ENCODE measurements at regions of chr2 and their contacts with region 1.

Region 1: GRCh38 chr2:157032017-157032416 is 225.5 kb upstream of the GALNT5 start:
- DNase-seq: peak; percentile 96
- ATAC-seq: peak; percentile 95
- H3K4me3 ChIP-seq: no peak overlapping the region
- H3K27ac ChIP-seq: peak overlapping the region; percentile 85
- H3K4me1 ChIP-seq: peaks cover 30% of the 10 kb centered on the region
- H3K27me3 ChIP-seq: no peaks in the 10 kb centered on the region
- CTCF ChIP-seq: no peak

Region 2: DNA sequence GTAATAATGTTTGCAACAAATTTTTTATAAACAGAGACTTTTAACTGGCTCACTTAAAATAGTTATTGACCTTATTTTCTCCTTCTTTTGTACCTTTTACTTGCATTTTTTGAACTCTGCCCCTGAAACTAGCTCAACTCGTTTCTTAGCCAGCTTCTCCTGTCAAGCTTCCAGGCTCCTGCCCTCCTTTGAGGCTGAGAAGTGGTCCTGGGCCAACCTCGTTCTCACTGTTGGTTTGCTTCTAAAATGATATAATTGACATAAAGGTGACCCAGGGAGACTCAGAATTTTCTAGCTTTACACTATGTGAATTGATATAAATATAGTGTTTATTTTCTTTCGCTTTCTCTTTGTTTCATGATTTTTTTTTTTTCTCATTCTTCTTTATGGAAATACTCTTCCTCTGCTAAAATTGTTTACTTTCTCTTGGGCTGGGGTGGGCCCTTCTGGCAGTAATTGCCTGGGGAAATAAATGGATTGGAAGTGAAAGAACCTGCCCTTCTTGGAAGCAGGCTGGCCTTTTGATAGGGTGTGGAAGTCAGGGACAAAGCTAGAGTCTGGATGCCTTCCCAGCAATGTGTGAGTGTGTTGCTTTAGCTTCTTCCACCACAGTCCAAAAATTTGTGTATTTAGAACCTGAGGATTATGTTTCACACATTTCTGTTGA is 565.1 kb before region 1 on chr2:
- CTCF ChIA-PET with region 1: no interaction called
- POLR2A ChIA-PET with region 1: interaction called, 3 read pairs
- intact Hi-C with region 1: loop called (anchors 10 kb)
- DNase-seq: peak; percentile 38
- ATAC-seq: peak; percentile 79
- H3K4me3 ChIP-seq: no peak overlapping the region
- H3K27ac ChIP-seq: peak overlapping the region; percentile 3; the same call in 1 of the 2 replicates
- H3K4me1 ChIP-seq: peaks cover 38% of the 10 kb centered on the region
- H3K27me3 ChIP-seq: no peaks in the 10 kb centered on the region
- CTCF ChIP-seq: no peak

Region 3: DNA sequence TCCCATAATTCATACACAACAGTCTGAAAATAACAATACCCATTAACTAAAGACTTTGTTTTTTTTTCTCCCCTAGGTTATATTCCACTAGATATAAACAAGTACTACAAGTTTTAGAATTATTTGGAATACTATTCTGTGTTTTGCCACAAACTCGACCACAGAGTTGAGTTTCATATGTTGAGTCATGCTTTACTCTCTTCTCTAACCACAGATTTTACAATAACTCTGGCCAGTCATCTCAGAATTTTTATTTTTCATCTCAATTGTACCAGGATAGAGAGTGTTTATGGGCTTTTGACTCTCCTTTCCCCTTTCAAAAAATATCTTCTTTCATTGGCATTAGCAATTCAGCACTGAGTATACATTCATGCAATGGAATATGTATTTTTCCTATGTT is 123.2 kb before region 1 on chr2:
- CTCF ChIA-PET with region 1: no interaction called
- POLR2A ChIA-PET with region 1: no interaction called
- intact Hi-C with region 1: loop called (anchors 2 kb)
- DNase-seq: peak; percentile 89
- ATAC-seq: peak; percentile 90
- H3K4me3 ChIP-seq: no peak overlapping the region
- H3K27ac ChIP-seq: peak overlapping the region; percentile 70
- H3K4me1 ChIP-seq: peaks cover 28% of the 10 kb centered on the region
- H3K27me3 ChIP-seq: no peaks in the 10 kb centered on the region
- CTCF ChIP-seq: no peak

Region 4: GRCh38 chr2:156935632-156936031 is 96.4 kb before region 1 on chr2:
- CTCF ChIA-PET with region 1: no interaction called
- POLR2A ChIA-PET with region 1: no interaction called
- intact Hi-C with region 1: loop called (anchors 2 kb)
- DNase-seq: peak; percentile 98
- ATAC-seq: peak; percentile 95
- H3K4me3 ChIP-seq: no peak overlapping the region; the same call in 1 of the 2 replicates
- H3K27ac ChIP-seq: peak overlapping the region; percentile 60
- H3K4me1 ChIP-seq: peaks cover 37% of the 10 kb centered on the region
- H3K27me3 ChIP-seq: no peaks in the 10 kb centered on the region
- CTCF ChIP-seq: no peak

Region 5: DNA sequence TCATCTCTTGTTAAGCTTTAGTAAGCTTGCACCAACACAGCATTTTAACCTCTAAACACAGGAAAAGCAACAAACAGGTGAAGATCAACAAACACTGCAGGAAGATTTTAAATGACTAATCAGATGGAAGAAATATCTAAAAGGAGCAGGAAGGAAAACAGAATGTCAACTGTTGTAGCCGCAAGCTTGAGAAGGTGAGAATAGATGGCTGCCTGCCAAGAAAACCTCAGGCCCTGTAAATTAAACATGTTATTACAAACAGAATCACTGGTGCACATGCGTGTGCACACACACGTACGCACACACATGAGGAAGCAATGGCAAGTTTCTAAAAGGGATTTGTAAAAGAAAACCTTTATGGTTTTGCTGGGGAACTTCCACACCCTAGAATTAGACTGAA is 32.4 kb before region 1 on chr2:
- CTCF ChIA-PET with region 1: no interaction called
- POLR2A ChIA-PET with region 1: no interaction called
- intact Hi-C with region 1: loop called (anchors 1 kb)
- DNase-seq: no peak
- ATAC-seq: no peak
- H3K4me3 ChIP-seq: no peak overlapping the region
- H3K27ac ChIP-seq: no peak overlapping the region
- H3K4me1 ChIP-seq: no peaks in the 10 kb centered on the region
- H3K27me3 ChIP-seq: no peaks in the 10 kb centered on the region
- CTCF ChIP-seq: no peak

Region 6: GRCh38 chr2:157158111-157158510 is 126.1 kb after region 1 on chr2:
- CTCF ChIA-PET with region 1: no interaction called
- POLR2A ChIA-PET with region 1: no interaction called
- intact Hi-C with region 1: no loop called
- DNase-seq: peak; percentile 43
- ATAC-seq: peak; percentile 49; the same call in 1 of the 2 replicates
- H3K4me3 ChIP-seq: no peak overlapping the region
- H3K27ac ChIP-seq: no peak overlapping the region
- H3K4me1 ChIP-seq: no peaks in the 10 kb centered on the region; the same call in 1 of the 2 replicates
- H3K27me3 ChIP-seq: no peaks in the 10 kb centered on the region
- CTCF ChIP-seq: no peak

Region 7: GRCh38 chr2:157182834-157183396 is 150.9 kb after region 1 on chr2:
- CTCF ChIA-PET with region 1: no interaction called
- POLR2A ChIA-PET with region 1: no interaction called
- intact Hi-C with region 1: loop called (anchors 1 kb)
- DNase-seq: peak; percentile 95
- ATAC-seq: peak; percentile 95
- H3K4me3 ChIP-seq: no peak overlapping the region; the same call in 1 of the 2 replicates
- H3K27ac ChIP-seq: peak overlapping the region; percentile 82
- H3K4me1 ChIP-seq: peaks cover 13% of the 10 kb centered on the region
- H3K27me3 ChIP-seq: no peaks in the 10 kb centered on the region
- CTCF ChIP-seq: no peak

Region 8: GRCh38 chr2:157194097-157194688 is 162.2 kb after region 1 on chr2:
- CTCF ChIA-PET with region 1: no interaction called
- POLR2A ChIA-PET with region 1: no interaction called
- intact Hi-C with region 1: no loop called
- DNase-seq: peak; percentile 79
- ATAC-seq: peak; percentile 45
- H3K4me3 ChIP-seq: no peak overlapping the region
- H3K27ac ChIP-seq: no peak overlapping the region
- H3K4me1 ChIP-seq: no peaks in the 10 kb centered on the region
- H3K27me3 ChIP-seq: no peaks in the 10 kb centered on the region
- CTCF ChIP-seq: peak; percentile 89